ENCODE measurements at regions of chr6 and their contacts with region 1.

Region 1: GRCh38 chr6:11585426-11586016 is 48.0 kb downstream of the TMEM170B start:
- DNase-seq: peak; percentile 32
- ATAC-seq: peak; percentile 70
- H3K4me3 ChIP-seq: no peak overlapping the region
- H3K27ac ChIP-seq: no peak overlapping the region
- H3K4me1 ChIP-seq: no peaks in the 10 kb centered on the region
- H3K27me3 ChIP-seq: no peaks in the 10 kb centered on the region
- CTCF ChIP-seq: peak; percentile 45 to 67 (median 59); a peak in 5 of 6 replicates
- EP300 ChIP-seq: no peak
- POLR2A ChIP-seq: no peak
- RAD21 ChIP-seq: peak; percentile 77

Region 2: DNA sequence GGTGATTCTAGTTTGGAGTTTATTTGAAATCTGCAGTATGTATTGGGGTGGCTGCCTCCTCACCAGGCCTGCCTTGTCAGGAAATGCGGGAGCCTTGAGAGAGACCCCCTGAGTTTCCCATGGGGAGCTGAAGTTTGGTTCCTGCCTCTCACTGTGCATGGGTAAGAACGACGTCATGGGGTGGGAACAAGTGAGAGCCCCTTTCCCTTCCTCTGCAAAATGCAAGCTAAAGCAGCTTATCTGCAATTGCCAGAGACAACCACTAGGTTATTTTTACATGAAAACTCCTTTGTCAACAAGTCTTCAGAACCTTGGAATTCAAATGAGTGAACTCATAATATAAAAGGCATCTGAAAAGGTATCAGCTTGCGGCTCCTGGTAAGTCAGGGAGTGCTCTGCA is 10.4 kb after region 1 on chr6:
- CTCF ChIA-PET with region 1: interaction called, 12 read pairs
- POLR2A ChIA-PET with region 1: interaction called, 3 read pairs
- RAD21 ChIA-PET with region 1: interaction called, 8 read pairs
- SMC1A ChIA-PET with region 1: interaction called, 9 read pairs
- in situ Hi-C with region 1: no loop called
- intact Hi-C with region 1: no loop called
- DNase-seq: no peak
- ATAC-seq: peak; percentile 37; the same call in 2 of the 3 replicates
- H3K4me3 ChIP-seq: no peak overlapping the region
- H3K27ac ChIP-seq: no peak overlapping the region
- H3K4me1 ChIP-seq: no peaks in the 10 kb centered on the region
- H3K27me3 ChIP-seq: 0 out of 4 replicates have a peak, but pooled peaks cover 0 to 2% of the 10 kb centered on the region in 2 experiments
- CTCF ChIP-seq: peak in 2 of 3 experiments; percentile 20; a peak in 2 of 6 replicates
- EP300 ChIP-seq: no peak
- POLR2A ChIP-seq: no peak
- RAD21 ChIP-seq: no peak

Region 3: GRCh38 chr6:12233693-12234571 is 648.4 kb after region 1 on chr6:
- CTCF ChIA-PET with region 1: interaction called, 9 read pairs
- POLR2A ChIA-PET with region 1: no interaction called
- RAD21 ChIA-PET with region 1: interaction called, 4 read pairs
- SMC1A ChIA-PET with region 1: interaction called, 6 read pairs
- in situ Hi-C with region 1: no loop called
- intact Hi-C with region 1: loop called (anchors 10 kb)
- DNase-seq: peak; percentile 66
- ATAC-seq: peak; percentile 89
- H3K4me3 ChIP-seq: no peak overlapping the region
- H3K27ac ChIP-seq: peak overlapping the region; percentile 65
- H3K4me1 ChIP-seq: peaks cover 22% of the 10 kb centered on the region
- H3K27me3 ChIP-seq: no peaks in the 10 kb centered on the region
- CTCF ChIP-seq: peak; percentile 46 to 64 (median 54); a peak in 5 of 6 replicates
- EP300 ChIP-seq: no peak
- POLR2A ChIP-seq: no peak
- RAD21 ChIP-seq: peak; percentile 73

Region 4: DNA sequence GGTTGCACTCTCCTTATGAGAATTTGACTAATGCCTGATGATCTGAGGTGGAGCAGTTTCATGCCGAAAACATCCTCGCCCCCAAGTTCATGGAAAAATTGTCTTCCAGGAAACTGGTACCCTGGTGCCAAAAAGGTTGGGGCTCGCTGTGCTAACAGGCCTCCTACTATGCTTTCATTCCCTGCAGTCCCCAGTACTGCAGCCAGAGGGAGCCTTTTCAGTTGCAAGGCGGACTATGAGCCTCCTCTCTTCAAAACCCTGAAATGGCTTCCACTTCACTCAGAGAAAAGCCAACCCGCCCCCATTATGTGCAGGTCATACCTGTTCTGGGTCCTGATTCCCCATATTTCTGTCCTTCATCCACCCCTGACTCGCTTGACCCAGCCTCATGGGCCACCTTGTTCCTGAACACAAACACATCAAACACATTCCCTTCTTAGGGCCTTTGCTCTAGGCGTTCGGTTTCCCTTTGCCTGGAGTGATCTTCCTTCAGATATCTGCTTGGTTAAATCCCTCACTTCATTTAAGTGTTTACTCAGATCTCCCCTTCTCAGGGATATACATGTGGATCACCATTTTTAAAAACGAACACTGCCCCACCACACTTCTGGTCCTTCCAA is 1304.8 kb after region 1 on chr6:
- CTCF ChIA-PET with region 1: interaction called, 6 read pairs
- POLR2A ChIA-PET with region 1: no interaction called
- RAD21 ChIA-PET with region 1: interaction called, 5 read pairs
- SMC1A ChIA-PET with region 1: no interaction called
- in situ Hi-C with region 1: loop called (anchors 10 kb)
- intact Hi-C with region 1: loop called (anchors 2 kb)
- DNase-seq: no peak
- ATAC-seq: peak; percentile 65
- H3K4me3 ChIP-seq: no peak overlapping the region
- H3K27ac ChIP-seq: no peak overlapping the region
- H3K4me1 ChIP-seq: no peaks in the 10 kb centered on the region
- H3K27me3 ChIP-seq: no peaks in the 10 kb centered on the region; a peak in 2 of 4 replicates
- CTCF ChIP-seq: peak; percentile 32 to 64 (median 55)
- EP300 ChIP-seq: no peak
- POLR2A ChIP-seq: no peak
- RAD21 ChIP-seq: no peak

Measured in GM12878 (cell line).